Activated CD8-positive, alpha-beta T cell treated with anti-CD3 and anti-CD28 coated beads for 36 hours (primary cell): ENCODE measurements at regions of chr3 and their contacts with region 1.

Region 1: GRCh38 chr3:43855674-43856299 is 165.0 kb downstream of the ABHD5 start:
- DNase-seq: peak; percentile 63
- ATAC-seq: peak; percentile 66
- H3K4me3 Mint-ChIP-seq: no peak overlapping the region
- H3K27ac Mint-ChIP-seq: no peak overlapping the region
- H3K4me1 Mint-ChIP-seq: no peaks in the 10 kb centered on the region
- H3K27me3 Mint-ChIP-seq: peaks cover 48% of the 10 kb centered on the region
- CTCF ChIP-seq: peak; percentile 64

Region 2: DNA sequence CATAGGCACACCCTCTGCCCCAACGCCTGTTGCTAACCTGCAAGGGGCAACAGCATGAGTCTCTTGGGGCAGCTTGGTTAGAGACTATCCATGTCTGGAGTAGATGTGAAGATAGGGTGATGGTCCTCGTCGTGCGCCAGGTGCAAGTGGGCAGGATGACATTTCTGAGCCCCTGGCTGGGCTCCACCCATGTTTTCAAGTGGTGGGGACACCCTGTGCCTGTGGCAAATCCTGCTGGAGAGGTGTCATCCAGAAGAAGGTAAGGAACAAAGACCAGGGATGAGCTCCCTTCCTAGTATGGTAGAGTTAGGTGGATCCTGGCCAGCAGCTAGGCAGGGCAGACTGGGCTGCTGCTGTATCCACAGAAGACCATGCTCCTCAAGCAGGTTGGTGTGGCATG is 12.4 kb before region 1 on chr3:
- CTCF ChIA-PET with region 1: interaction called, 11 read pairs
- POLR2A ChIA-PET with region 1: no interaction called
- intact Hi-C with region 1: no loop called
- DNase-seq: no peak
- ATAC-seq: no peak
- H3K4me3 Mint-ChIP-seq: no peak overlapping the region
- H3K27ac Mint-ChIP-seq: no peak overlapping the region
- H3K4me1 Mint-ChIP-seq: no peaks in the 10 kb centered on the region
- H3K27me3 Mint-ChIP-seq: peaks cover 20% of the 10 kb centered on the region
- CTCF ChIP-seq: no peak